ENCODE measurements at regions of chr10 and their contacts with region 1.

Region 1: DNA sequence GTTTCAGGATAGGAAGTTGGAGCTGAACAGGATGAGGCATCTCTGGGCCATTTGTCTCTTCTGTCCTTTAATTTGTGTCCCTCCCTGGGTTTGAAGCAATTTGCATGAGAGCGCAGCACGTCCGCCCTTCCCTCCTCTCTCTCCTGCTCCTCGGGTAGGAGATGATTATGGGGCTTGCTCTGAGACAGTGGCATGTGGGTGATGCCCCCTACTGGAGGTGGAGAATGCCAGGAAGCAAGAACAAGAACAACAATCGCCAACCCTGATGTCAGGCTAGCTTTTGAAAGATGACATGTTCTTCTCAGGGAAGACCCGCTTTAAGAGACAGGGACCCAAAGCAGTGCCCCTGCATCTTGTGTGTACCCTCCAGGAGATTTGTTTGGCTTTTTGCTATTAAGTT is 63.9 kb upstream of the LOXL4 start:
- DNase-seq: peak; percentile 68
- ATAC-seq: peak; percentile 97
- H3K4me3 ChIP-seq: no peak overlapping the region
- H3K27ac ChIP-seq: no peak overlapping the region
- H3K4me1 ChIP-seq: peaks cover 0 to 7% of the 10 kb centered on the region in 2 experiments; a peak in 1 of 4 replicates
- H3K27me3 ChIP-seq: peaks cover 5% of the 10 kb centered on the region; the same call in 1 of the 2 replicates
- CTCF ChIP-seq: peak; percentile 87 to 98 (median 97)
- POLR2A ChIP-seq: no peak
- RAD21 ChIP-seq: peak; percentile 93

Region 2: DNA sequence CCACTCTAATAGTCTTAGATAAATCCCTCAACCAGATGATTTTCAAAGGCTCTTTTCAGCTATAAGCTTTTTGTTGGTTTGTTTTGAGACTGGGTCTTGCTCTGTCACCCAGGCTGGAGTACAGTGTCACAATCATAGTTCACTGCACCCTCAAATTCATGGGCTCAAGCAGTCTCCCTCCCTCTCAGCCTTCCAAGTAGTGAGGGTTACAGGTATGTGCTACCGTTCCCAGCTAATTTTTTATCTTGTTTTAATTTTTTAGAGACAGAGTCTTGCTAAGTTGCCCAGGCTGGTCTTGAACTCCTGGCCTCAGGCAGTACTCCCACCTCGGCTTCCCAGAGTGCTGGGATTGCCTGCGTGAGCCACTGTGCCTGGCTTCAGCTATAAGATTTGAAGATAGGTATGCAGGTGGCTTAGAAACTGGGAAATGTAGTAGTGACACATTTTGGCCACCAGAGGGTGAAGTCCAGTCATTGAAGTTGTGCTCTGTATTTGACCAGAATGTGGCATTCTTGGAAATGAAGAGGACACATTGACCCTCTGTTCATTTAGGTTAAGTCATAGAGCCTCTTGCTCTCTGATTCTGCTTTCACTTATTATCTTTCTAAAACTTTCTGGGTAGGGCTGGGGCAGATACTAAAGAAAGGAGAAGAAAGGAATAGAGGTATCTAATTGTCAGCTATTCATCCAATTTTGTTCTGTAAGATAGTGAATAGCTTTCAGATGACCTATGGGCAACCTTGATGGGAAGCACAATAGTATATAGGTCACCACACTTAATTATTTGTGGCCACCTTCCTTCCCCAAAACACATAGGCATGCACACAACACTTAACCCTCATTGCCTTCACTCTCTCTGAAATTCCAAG is 161.4 kb before region 1 on chr10:
- CTCF ChIA-PET with region 1: interaction called, 6 read pairs
- POLR2A ChIA-PET with region 1: no interaction called
- RAD21 ChIA-PET with region 1: interaction called in 1 of 2 experiments, 5 read pairs
- intact Hi-C with region 1: loop called (anchors 10 kb)
- DNase-seq: peak; percentile 40
- ATAC-seq: peak; percentile 98
- H3K4me3 ChIP-seq: no peak overlapping the region
- H3K27ac ChIP-seq: no peak overlapping the region
- H3K4me1 ChIP-seq: no peaks in the 10 kb centered on the region
- H3K27me3 ChIP-seq: no peaks in the 10 kb centered on the region
- CTCF ChIP-seq: peak; percentile 56 to 76 (median 75); a peak in 5 of 6 replicates
- POLR2A ChIP-seq: no peak
- RAD21 ChIP-seq: peak; percentile 59

Region 3: GRCh38 chr10:98262571-98262970 is 69.3 kb before region 1 on chr10:
- CTCF ChIA-PET with region 1: interaction called, 3 read pairs
- POLR2A ChIA-PET with region 1: no interaction called
- RAD21 ChIA-PET with region 1: no interaction called
- intact Hi-C with region 1: loop called (anchors 1 kb)
- DNase-seq: peak; percentile 42
- ATAC-seq: peak; percentile 82
- H3K4me3 ChIP-seq: no peak overlapping the region
- H3K27ac ChIP-seq: no peak overlapping the region
- H3K4me1 ChIP-seq: peaks cover 18 to 46% of the 10 kb centered on the region in 2 experiments
- H3K27me3 ChIP-seq: no peaks in the 10 kb centered on the region
- CTCF ChIP-seq: peak in 2 of 3 experiments; percentile 67 to 69; a peak in 4 of 6 replicates
- POLR2A ChIP-seq: no peak
- RAD21 ChIP-seq: no peak

Region 4: DNA sequence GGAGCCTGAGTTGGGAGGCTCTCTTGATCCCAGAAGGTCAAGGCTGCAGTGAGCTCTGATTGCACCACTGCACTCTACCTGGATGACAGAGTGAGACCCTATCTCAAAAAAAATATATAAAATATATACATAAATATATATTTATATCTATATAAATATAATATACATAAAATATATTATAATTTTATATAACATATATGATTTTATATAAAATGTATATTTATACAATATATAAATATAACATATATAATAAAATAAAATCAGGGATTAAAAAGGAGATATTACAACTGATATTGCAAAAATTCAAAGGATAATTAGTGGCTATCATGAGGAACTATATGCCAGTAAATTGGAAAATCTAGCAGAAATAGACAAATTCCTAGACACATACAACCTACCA is 468.4 kb after region 1 on chr10:
- CTCF ChIA-PET with region 1: no interaction called
- POLR2A ChIA-PET with region 1: no interaction called
- RAD21 ChIA-PET with region 1: no interaction called
- intact Hi-C with region 1: no loop called
- DNase-seq: no peak
- ATAC-seq: no peak
- H3K4me3 ChIP-seq: no peak overlapping the region
- H3K27ac ChIP-seq: no peak overlapping the region
- H3K4me1 ChIP-seq: no peaks in the 10 kb centered on the region
- H3K27me3 ChIP-seq: peaks cover 6% of the 10 kb centered on the region; the same call in 1 of the 2 replicates
- CTCF ChIP-seq: no peak
- POLR2A ChIP-seq: no peak
- RAD21 ChIP-seq: no peak